OCI-LY7 (cell line): ENCODE measurements at regions of chr4 and their contacts with region 1.

Region 1: DNA sequence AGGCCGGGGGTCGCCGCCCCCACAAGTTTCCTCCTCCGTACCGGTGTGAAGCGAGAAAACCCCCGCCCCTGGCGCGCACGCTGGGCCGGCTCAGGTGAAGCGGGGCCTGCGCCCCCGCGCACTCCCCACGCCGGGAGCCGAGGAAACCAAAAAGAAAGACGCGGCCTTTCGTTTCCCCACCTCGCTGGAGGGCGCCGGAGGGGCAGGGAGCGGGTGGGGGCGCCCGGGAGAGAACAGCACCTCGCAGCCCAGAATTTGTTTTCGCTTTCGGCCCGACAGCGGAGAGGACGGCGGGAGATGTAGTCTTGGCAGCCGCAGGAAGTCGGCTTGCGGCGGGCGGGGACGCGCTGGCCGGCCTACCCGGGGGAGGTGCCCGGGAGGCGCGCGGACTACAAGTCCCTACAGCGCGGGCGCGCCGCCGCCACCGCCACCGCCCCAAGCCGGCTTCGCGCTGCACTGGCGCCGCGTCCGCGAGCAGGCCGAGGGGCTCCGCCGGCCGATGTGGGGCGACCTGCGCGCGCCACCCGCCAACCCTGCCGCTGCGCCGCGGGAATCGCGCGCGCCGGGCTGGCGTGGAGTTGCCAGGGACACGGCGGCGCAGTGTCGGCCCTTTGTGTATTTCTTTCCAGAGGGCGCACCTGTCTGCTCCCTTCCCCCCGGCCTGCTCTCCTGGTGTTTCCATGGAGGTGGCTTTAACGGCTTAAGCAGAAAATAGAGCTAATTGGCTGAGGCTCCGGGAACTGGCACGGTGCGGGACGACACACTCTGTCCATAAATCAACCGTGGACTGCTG is at the start of gene OTUD4:
- DNase-seq: peak; percentile 97
- H3K4me3 ChIP-seq: peak within 1 kb of the TSS; percentile 97
- H3K27ac ChIP-seq: peak within 1 kb of the TSS; percentile 82
- H3K4me1 ChIP-seq: peaks cover 34% of the 10 kb centered on the region
- CTCF ChIP-seq: peak; percentile 59
- total RNA-seq, gene OTUD4: 17.3 and 23.4 TPM in 2 replicates

Region 2: DNA sequence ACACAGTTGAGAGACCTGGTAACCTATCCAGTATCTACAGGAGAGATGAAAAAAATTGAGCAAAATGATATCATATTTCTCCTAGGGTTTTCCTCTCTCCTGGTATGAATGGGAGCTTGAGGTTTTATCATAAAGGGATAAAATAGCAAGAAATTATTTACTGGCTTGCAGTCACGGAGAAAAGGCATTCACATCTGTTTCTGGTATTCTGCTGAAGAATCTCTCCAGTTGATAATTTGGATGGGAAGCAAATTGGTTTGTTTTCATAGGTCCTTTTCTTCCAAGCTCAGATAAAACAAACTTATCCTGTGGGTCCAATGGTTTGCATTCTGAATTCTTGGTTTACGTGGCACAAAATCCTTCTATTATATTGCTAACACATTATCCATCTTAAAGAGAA is 956.8 kb before region 1 on chr4:
- CTCF ChIA-PET with region 1: no interaction called
- POLR2A ChIA-PET with region 1: no interaction called
- intact Hi-C with region 1: no loop called
- DNase-seq: no peak
- H3K4me3 ChIP-seq: no peak overlapping the region
- H3K27ac ChIP-seq: no peak overlapping the region
- H3K4me1 ChIP-seq: no peaks in the 10 kb centered on the region
- CTCF ChIP-seq: no peak

Region 3: DNA sequence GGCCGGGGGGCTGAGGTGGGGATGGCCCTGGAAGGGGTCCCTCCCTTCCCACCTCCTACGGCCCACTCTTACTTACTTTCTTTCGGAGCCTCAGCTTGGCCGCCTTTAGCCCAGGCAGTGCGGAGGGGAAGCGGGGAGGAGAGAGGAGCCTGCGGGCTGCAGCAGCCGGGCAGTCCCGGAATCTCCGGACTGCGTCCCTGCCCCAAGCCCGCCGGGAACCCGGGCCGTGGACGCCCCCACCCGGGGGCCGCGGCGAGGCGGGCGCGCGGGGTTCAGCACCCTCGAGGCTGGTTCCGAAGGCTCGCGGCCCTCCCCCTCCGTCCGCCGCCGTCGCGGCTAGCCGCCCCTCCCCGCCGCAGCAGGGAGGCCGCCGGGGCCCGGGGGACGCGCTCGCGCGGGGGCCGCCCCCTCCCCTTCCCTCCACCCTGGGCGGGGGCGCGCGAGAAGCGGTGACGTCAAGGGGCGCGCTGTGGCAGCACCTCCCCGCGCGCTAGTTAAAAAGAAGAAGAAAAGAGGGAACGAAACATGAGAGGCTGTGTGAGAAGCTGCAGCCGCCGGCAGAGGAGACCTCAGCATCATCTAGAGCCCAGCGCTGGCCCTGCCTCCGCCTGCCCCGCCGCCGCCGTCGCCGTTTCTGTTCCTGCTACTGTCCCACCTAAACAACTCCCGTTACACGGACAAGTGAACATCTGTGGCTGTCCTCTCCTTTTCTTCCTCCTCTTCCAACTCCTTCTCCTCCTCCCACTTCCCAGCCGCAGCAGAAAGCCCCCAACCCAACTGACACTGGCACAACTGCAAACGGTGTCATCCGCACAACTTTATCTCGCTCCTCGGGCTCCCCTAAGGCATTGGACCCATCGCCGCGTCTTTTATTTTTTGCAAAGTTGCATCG is 534.6 kb before region 1 on chr4 and contains the start of gene HHIP:
- CTCF ChIA-PET with region 1: no interaction called
- POLR2A ChIA-PET with region 1: no interaction called
- intact Hi-C with region 1: no loop called
- DNase-seq: no peak
- H3K4me3 ChIP-seq: no peak within 1 kb of the TSS
- H3K27ac ChIP-seq: no peak within 1 kb of the TSS
- H3K4me1 ChIP-seq: no peaks in the 10 kb centered on the region
- CTCF ChIP-seq: no peak
- total RNA-seq, gene HHIP: not detected in 2 replicates

Region 4: GRCh38 chr4:145097821-145098674 is 82.4 kb before region 1 on chr4 and contains the starts of genes ABCE1 and ANAPC10:
- CTCF ChIA-PET with region 1: interaction called, 3 read pairs
- POLR2A ChIA-PET with region 1: interaction called, 11 read pairs
- intact Hi-C with region 1: loop called (anchors 2 kb)
- DNase-seq: peak; percentile 99
- H3K4me3 ChIP-seq: peak within 1 kb of the TSS; percentile 79
- H3K27ac ChIP-seq: peak within 1 kb of the TSS; percentile 80
- H3K4me1 ChIP-seq: peaks cover 52% of the 10 kb centered on the region
- CTCF ChIP-seq: peak; percentile 50
- total RNA-seq, gene ABCE1: 108 and 119 TPM in 2 replicates
- total RNA-seq, gene ANAPC10: 34.1 and 46.1 TPM in 2 replicates

Region 5: DNA sequence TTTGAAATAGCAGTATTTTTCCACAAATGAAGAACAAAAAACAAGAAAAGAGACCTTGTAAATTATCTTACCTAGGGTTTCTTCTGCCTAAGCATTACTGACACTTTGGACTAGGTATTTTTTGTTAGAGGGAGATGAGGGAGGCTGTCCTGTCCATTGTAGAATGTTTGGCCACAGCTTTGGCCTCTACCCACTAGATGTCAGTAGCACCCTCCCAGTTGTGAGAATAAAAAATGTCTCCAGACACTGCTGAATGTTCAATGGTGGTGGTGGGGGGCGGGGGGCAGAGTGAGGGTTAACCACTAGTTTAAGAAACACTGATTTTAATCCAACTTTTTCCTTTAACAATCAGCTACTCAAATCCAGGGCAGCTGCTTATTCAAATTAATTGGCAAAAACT is 25.9 kb before region 1 on chr4:
- CTCF ChIA-PET with region 1: no interaction called
- POLR2A ChIA-PET with region 1: interaction called, 10 read pairs
- intact Hi-C with region 1: no loop called
- DNase-seq: peak; percentile 51
- H3K4me3 ChIP-seq: no peak overlapping the region
- H3K27ac ChIP-seq: no peak overlapping the region
- H3K4me1 ChIP-seq: peaks cover 22% of the 10 kb centered on the region
- CTCF ChIP-seq: peak; percentile 82

Region 6: GRCh38 chr4:145501051-145501660 is 320.7 kb after region 1 on chr4:
- CTCF ChIA-PET with region 1: no interaction called
- POLR2A ChIA-PET with region 1: no interaction called
- intact Hi-C with region 1: loop called (anchors 5 kb)
- DNase-seq: peak; percentile 96
- H3K4me3 ChIP-seq: peak overlapping the region; percentile 51
- H3K27ac ChIP-seq: peak overlapping the region; percentile 99
- H3K4me1 ChIP-seq: peaks cover 100% of the 10 kb centered on the region
- CTCF ChIP-seq: 0 out of 2 replicates have a peak, but pooled peaks have one; percentile 3

Region 7: GRCh38 chr4:145580906-145581305 is 400.4 kb after region 1 on chr4:
- CTCF ChIA-PET with region 1: no interaction called
- POLR2A ChIA-PET with region 1: interaction called, 10 read pairs
- intact Hi-C with region 1: no loop called
- DNase-seq: no peak
- H3K4me3 ChIP-seq: no peak overlapping the region
- H3K27ac ChIP-seq: no peak overlapping the region
- H3K4me1 ChIP-seq: no peaks in the 10 kb centered on the region
- CTCF ChIP-seq: no peak

Region 8: DNA sequence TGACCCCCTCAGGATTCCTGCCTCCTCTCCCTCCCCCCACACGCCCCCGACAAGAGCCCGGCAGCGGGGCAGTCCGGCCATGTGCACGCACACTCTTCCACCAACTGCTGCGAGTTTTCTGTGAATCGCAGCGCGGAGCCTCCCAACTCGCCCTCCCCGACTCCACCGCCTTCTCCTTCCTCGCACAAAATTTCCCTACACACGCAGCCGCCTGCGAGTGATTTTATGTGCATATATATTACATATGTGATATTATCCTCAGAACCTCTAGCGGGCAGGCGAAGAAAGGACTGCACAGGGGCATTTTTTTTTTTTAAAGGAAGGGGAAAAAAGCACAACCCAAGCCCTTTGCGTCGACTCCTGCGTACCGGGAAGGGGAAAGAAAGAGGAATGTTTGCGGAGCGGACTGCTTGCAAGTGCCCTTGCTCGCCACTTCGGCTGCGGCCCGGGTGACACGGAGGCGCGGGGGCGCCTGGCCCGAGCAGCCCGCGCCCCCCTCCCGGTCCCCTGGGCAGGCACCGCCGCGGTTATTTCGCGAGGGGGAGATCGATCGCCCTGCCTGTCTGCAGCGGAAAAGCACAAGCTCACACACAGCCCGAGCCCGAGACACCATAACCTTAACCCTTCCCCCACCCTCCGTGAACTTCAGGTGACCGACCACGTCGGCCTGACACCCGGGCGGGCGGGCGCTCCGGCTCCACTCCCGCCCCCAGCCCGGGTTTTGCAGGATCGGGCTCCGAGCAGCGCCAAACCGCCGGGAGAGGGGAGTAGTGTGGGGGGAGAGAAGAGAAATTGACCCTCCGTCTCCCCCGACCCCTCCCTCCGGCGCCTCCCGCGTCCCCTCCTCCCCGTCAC is 755.9 kb after region 1 on chr4:
- CTCF ChIA-PET with region 1: no interaction called
- POLR2A ChIA-PET with region 1: interaction called, 4 read pairs
- intact Hi-C with region 1: loop called (anchors 5 kb)
- DNase-seq: peak; percentile 89
- H3K4me3 ChIP-seq: peak overlapping the region; percentile 87
- H3K27ac ChIP-seq: peak overlapping the region; percentile 92
- H3K4me1 ChIP-seq: peaks cover 58% of the 10 kb centered on the region
- CTCF ChIP-seq: peak; percentile 67

Region 9: DNA sequence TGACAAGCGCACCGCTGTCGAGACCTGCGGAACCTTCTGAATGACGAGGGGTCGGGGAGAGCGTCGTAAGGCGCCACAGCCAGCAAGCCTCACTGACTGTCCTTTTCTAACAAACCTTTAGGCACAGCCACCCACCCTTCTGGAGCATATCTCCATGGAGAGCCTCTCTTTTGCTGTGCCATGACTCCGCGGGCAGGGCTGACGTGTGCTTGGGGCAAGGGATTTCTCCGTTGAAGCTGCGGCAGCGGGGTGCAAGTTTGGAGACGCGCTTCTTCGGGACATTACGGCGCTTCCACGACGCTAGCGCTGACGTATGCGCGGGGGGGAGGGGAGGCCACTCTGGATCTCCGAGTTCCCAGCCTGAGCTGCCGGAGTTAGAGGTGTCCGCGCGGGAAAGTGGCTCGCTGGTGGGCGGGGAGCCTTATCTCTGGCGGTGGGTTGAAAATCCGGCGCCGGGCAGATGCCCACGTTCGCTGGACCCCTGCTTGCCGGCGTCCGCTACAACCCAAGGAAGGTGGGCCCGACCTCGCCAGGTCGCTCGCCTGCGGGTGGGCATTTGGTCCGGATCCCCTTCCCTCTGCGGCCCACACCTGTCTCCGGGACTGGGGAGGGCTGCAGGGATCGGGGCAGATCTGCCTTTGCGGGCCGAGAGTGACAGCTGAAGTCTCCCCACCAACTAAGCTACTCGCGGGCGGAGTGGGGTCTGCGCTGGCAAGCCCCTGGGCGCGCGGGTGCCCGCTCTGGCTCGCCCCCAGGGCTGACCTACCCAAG is 1341.8 kb after region 1 on chr4:
- CTCF ChIA-PET with region 1: no interaction called
- POLR2A ChIA-PET with region 1: no interaction called
- intact Hi-C with region 1: loop called (anchors 5 kb)
- DNase-seq: peak; percentile 88
- H3K4me3 ChIP-seq: peak overlapping the region; percentile 82
- H3K27ac ChIP-seq: peak overlapping the region; percentile 54
- H3K4me1 ChIP-seq: peaks cover 17% of the 10 kb centered on the region
- CTCF ChIP-seq: no peak